ENCODE measurements at regions of chr19 and their contacts with region 1.

Region 1: GRCh38 chr19:1312767-1313694 is 27.4 kb downstream of the EFNA2 start:
- DNase-seq: peak; percentile 69
- ATAC-seq: peak; percentile 70
- H3K4me3 ChIP-seq: no peak overlapping the region
- H3K27ac ChIP-seq: no peak overlapping the region
- H3K4me1 ChIP-seq: peaks cover 8% of the 10 kb centered on the region
- H3K27me3 ChIP-seq: no peaks in the 10 kb centered on the region
- CTCF ChIP-seq: no peak

Region 2: GRCh38 chr19:1183534-1184172 is 129.4 kb before region 1 on chr19:
- CTCF ChIA-PET with region 1: no interaction called
- POLR2A ChIA-PET with region 1: no interaction called
- intact Hi-C with region 1: no loop called
- DNase-seq: peak; percentile 92
- ATAC-seq: peak; percentile 81
- H3K4me3 ChIP-seq: no peak overlapping the region
- H3K27ac ChIP-seq: peak overlapping the region; percentile 95
- H3K4me1 ChIP-seq: peaks cover 40% of the 10 kb centered on the region
- H3K27me3 ChIP-seq: no peaks in the 10 kb centered on the region
- CTCF ChIP-seq: no peak

Region 3: GRCh38 chr19:1507763-1508509 is 194.9 kb after region 1 on chr19:
- CTCF ChIA-PET with region 1: no interaction called
- POLR2A ChIA-PET with region 1: interaction called, 11 read pairs
- intact Hi-C with region 1: no loop called
- DNase-seq: peak; percentile 89
- ATAC-seq: peak; percentile 82
- H3K4me3 ChIP-seq: peak overlapping the region; percentile 66
- H3K27ac ChIP-seq: peak overlapping the region; percentile 78
- H3K4me1 ChIP-seq: peaks cover 3% of the 10 kb centered on the region; the same call in 1 of the 2 replicates
- H3K27me3 ChIP-seq: no peaks in the 10 kb centered on the region
- CTCF ChIP-seq: no peak

Region 4: DNA sequence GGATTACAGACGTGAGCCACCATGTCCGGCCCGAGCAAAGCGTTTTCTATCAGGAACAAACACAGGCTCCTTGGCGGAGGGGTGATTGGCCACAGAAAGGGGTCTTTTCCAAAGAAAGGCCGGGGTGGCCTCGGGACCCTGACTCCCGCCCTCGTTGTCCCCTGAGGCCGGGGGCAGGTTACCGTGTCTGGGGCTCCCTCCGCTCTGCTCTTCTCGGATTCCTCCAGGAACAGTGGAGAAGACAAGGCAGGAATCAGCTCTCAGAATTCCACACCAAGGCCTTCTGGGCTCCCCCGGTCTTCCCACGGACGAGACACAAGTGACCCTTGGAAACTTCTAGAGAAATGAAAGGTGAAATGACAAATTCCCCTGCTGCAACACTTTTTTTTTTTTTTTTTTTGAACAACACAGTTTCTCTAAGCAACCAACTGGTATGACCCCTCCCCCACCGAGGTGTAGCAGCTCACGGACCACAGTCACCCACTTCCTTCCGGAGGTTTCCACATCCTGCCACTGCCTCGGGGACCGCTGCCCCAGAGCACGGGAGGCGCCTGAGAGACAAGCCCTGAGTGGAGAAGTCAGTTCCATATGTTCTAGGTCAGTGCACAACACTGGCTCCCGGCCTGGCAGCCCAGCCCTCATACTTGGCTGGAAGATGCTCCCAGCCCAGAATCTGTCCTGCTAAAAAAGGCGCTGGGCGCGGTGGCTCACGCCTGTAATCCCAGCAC is 772.1 kb after region 1 on chr19:
- CTCF ChIA-PET with region 1: no interaction called
- POLR2A ChIA-PET with region 1: no interaction called
- intact Hi-C with region 1: no loop called
- DNase-seq: peak; percentile 59
- ATAC-seq: peak; percentile 48
- H3K4me3 ChIP-seq: no peak overlapping the region
- H3K27ac ChIP-seq: no peak overlapping the region
- H3K4me1 ChIP-seq: peaks cover 19% of the 10 kb centered on the region
- H3K27me3 ChIP-seq: no peaks in the 10 kb centered on the region
- CTCF ChIP-seq: no peak